K562 (cell line): ENCODE measurements at regions of chr19 and their contacts with region 1.

Region 1: GRCh38 chr19:6516659-6517291 is 14.1 kb upstream of the TNFSF9 start:
- DNase-seq: peak; percentile 86 to 94 (median 90)
- ATAC-seq: peak; percentile 95
- H3K4me3 ChIP-seq: peak overlapping the region; percentile 54
- H3K27ac ChIP-seq: peak overlapping the region; percentile 83
- H3K4me1 ChIP-seq: peaks cover 7 to 38% of the 10 kb centered on the region in 2 experiments; a peak in 4 of 5 replicates
- H3K27me3 ChIP-seq: no peaks in the 10 kb centered on the region
- CTCF ChIP-seq: peak; percentile 96 to 97 (median 96)
- EP300 ChIP-seq: no peak; the same call in 1 of the 2 replicates
- POLR2A ChIP-seq: peak; percentile 59; the same call in 1 of the 2 replicates
- RAD21 ChIP-seq: peak; percentile 97 to 98

Region 2: GRCh38 chr19:6460101-6460853 is 56.5 kb before region 1 on chr19:
- CTCF ChIA-PET with region 1: no interaction called
- POLR2A ChIA-PET with region 1: no interaction called
- in situ Hi-C with region 1: no loop called
- intact Hi-C with region 1: no loop called
- DNase-seq: peak; percentile 97 to 99 (median 98)
- ATAC-seq: peak; percentile 92
- H3K4me3 ChIP-seq: peak overlapping the region; percentile 77
- H3K27ac ChIP-seq: peak overlapping the region; percentile 81
- H3K4me1 ChIP-seq: peaks cover 18 to 40% of the 10 kb centered on the region in 2 experiments; a peak in 4 of 5 replicates
- H3K27me3 ChIP-seq: peaks cover under 1 to 5% of the 10 kb centered on the region in 2 experiments; a peak in 4 of 5 replicates
- CTCF ChIP-seq: peak; percentile 63 to 82 (median 75)
- EP300 ChIP-seq: no peak
- POLR2A ChIP-seq: no peak
- RAD21 ChIP-seq: peak; percentile 14 to 24; a peak in 1 of 4 replicates

Region 3: GRCh38 chr19:6498321-6499036 is 18.3 kb before region 1 on chr19:
- CTCF ChIA-PET with region 1: no interaction called
- POLR2A ChIA-PET with region 1: no interaction called
- in situ Hi-C with region 1: no loop called
- intact Hi-C with region 1: no loop called
- DNase-seq: peak in 1 of 4 experiments; percentile 10
- ATAC-seq: no peak
- H3K4me3 ChIP-seq: no peak overlapping the region
- H3K27ac ChIP-seq: no peak overlapping the region
- H3K4me1 ChIP-seq: peaks cover 0 to 32% of the 10 kb centered on the region in 2 experiments; a peak in 3 of 5 replicates
- H3K27me3 ChIP-seq: no peaks in the 10 kb centered on the region
- CTCF ChIP-seq: no peak
- EP300 ChIP-seq: no peak
- POLR2A ChIP-seq: no peak
- RAD21 ChIP-seq: no peak

Region 4: GRCh38 chr19:6530386-6531161 is 13.8 kb after region 1 on chr19 and contains the start of gene TNFSF9:
- CTCF ChIA-PET with region 1: no interaction called
- POLR2A ChIA-PET with region 1: interaction called, 30 read pairs
- in situ Hi-C with region 1: no loop called
- intact Hi-C with region 1: no loop called
- DNase-seq: peak; percentile 87 to 95 (median 92)
- ATAC-seq: peak; percentile 84
- H3K4me3 ChIP-seq: peak within 1 kb of the TSS; percentile 83
- H3K27ac ChIP-seq: peak within 1 kb of the TSS; percentile 99
- H3K4me1 ChIP-seq: peaks cover 33 to 59% of the 10 kb centered on the region in 2 experiments
- H3K27me3 ChIP-seq: no peaks in the 10 kb centered on the region
- CTCF ChIP-seq: no peak
- EP300 ChIP-seq: no peak; the same call in 1 of the 2 replicates
- POLR2A ChIP-seq: peak; percentile 96
- RAD21 ChIP-seq: no peak
- polyA plus RNA-seq, gene TNFSF9: 1.4 to 2.1 TPM

Region 5: DNA sequence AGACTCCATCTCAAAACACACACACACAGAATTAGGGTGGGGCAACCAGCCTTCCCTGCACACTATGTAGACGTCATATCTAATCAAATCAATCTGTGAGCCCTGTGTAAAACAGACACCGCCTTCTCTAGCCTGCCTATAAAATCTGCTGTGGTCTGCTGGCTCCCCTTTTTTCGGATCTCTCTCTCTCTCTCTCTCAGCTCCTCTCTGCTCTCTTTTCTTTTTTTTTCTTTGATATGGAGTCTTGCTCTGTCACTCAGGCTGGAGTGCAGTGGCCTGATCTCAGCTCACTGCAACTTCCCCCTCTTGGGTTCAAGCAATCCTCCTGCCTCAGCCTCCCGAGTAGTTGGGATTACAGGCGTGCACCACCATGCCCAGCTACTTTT is 85.9 kb after region 1 on chr19:
- CTCF ChIA-PET with region 1: interaction called, 3 read pairs
- POLR2A ChIA-PET with region 1: no interaction called
- in situ Hi-C with region 1: no loop called
- intact Hi-C with region 1: loop called (anchors 5 kb)
- DNase-seq: peak in 1 of 4 experiments; percentile 60
- ATAC-seq: peak; percentile 63
- H3K4me3 ChIP-seq: peak overlapping the region; percentile 49
- H3K27ac ChIP-seq: peak overlapping the region; percentile 94
- H3K4me1 ChIP-seq: peaks cover 9 to 23% of the 10 kb centered on the region in 2 experiments; a peak in 4 of 5 replicates
- H3K27me3 ChIP-seq: no peaks in the 10 kb centered on the region
- CTCF ChIP-seq: no peak
- EP300 ChIP-seq: no peak
- POLR2A ChIP-seq: peak; percentile 58; the same call in 1 of the 2 replicates
- RAD21 ChIP-seq: no peak

Region 6: GRCh38 chr19:6632002-6632621 is 115.3 kb after region 1 on chr19:
- CTCF ChIA-PET with region 1: interaction called, 23 read pairs
- POLR2A ChIA-PET with region 1: no interaction called
- in situ Hi-C with region 1: no loop called
- intact Hi-C with region 1: loop called (anchors 1 kb)
- DNase-seq: peak; percentile 52 to 85 (median 75)
- ATAC-seq: peak; percentile 80
- H3K4me3 ChIP-seq: no peak overlapping the region
- H3K27ac ChIP-seq: no peak overlapping the region
- H3K4me1 ChIP-seq: peaks cover 0 to 3% of the 10 kb centered on the region in 2 experiments; a peak in 1 of 5 replicates
- H3K27me3 ChIP-seq: no peaks in the 10 kb centered on the region
- CTCF ChIP-seq: peak; percentile 75 to 89 (median 81)
- EP300 ChIP-seq: no peak
- POLR2A ChIP-seq: no peak
- RAD21 ChIP-seq: peak; percentile 70 to 83